ENCODE measurements at regions of chr5 and their contacts with region 1.

Region 1: GRCh38 chr5:81301271-81302015 is at the start of gene ZCCHC9:
- DNase-seq: peak; percentile 97
- ATAC-seq: peak; percentile 90
- H3K4me3 Mint-ChIP-seq: peak within 1 kb of the TSS; percentile 86
- H3K27ac Mint-ChIP-seq: peak within 1 kb of the TSS; percentile 97
- H3K4me1 Mint-ChIP-seq: peaks cover 57% of the 10 kb centered on the region
- H3K27me3 Mint-ChIP-seq: no peaks in the 10 kb centered on the region
- total RNA-seq, gene ZCCHC9: 44.3 to 45.5 TPM

Region 2: GRCh38 chr5:80407735-80408482 is 893.5 kb before region 1 on chr5 and contains the start of gene ZFYVE16:
- CTCF ChIA-PET with region 1: no interaction called
- POLR2A ChIA-PET with region 1: no interaction called
- intact Hi-C with region 1: loop called in 1 of 2 experiments (anchors 1 kb)
- DNase-seq: peak; percentile 98
- ATAC-seq: peak; percentile 94
- H3K4me3 Mint-ChIP-seq: peak within 1 kb of the TSS; percentile 82
- H3K27ac Mint-ChIP-seq: peak within 1 kb of the TSS; percentile 94
- H3K4me1 Mint-ChIP-seq: peaks cover 17% of the 10 kb centered on the region
- H3K27me3 Mint-ChIP-seq: no peaks in the 10 kb centered on the region
- total RNA-seq, gene ZFYVE16: 11.2 to 11.8 TPM

Region 3: GRCh38 chr5:80754900-80755299 is 546.5 kb before region 1 on chr5:
- CTCF ChIA-PET with region 1: no interaction called
- POLR2A ChIA-PET with region 1: no interaction called
- intact Hi-C with region 1: loop called in 1 of 2 experiments (anchors 5 kb)
- DNase-seq: peak; percentile 71
- ATAC-seq: peak; percentile 60
- H3K4me3 Mint-ChIP-seq: peak overlapping the region; percentile 41
- H3K27ac Mint-ChIP-seq: peak overlapping the region; percentile 80
- H3K4me1 Mint-ChIP-seq: peaks cover 55% of the 10 kb centered on the region
- H3K27me3 Mint-ChIP-seq: no peaks in the 10 kb centered on the region

Region 4: DNA sequence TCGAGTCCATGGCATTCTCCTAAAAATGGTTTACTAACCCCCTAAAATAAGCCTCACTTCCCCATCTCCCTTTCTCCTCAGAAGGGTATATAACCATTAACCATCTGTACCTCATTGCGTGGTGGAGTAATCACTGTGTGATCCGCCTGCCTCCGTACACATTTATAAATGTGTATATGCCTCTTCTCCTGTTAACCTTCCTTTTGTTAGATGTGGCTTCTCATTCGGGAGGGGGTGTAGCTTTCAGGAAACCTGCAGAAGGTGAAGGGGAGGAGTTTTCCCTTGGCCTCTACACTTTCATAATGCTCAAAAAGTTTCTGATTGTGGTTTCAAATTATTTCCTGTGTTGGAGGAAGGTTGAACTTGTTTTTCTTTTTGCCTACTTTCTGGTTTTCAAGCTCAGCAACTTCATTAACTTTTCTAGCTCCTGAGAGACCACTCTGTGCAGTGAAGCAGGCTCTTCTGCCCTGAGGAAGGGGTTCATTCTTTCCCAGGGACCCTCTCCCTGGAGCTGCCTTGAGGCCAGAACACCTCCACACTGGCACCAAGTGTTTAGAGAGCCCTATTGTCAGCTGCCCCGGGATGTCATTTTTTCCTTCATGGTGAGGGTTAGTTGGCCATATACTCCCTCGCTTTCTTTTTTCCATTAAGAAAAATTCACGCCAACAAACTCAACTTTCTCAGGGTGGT is 294.4 kb before region 1 on chr5:
- CTCF ChIA-PET with region 1: no interaction called
- POLR2A ChIA-PET with region 1: no interaction called
- intact Hi-C with region 1: loop called in 1 of 2 experiments (anchors 5 kb)
- DNase-seq: peak; percentile 71
- ATAC-seq: peak; percentile 83
- H3K4me3 Mint-ChIP-seq: peak overlapping the region; percentile 77
- H3K27ac Mint-ChIP-seq: peak overlapping the region; percentile 96
- H3K4me1 Mint-ChIP-seq: peaks cover 82% of the 10 kb centered on the region
- H3K27me3 Mint-ChIP-seq: no peaks in the 10 kb centered on the region

Region 5: DNA sequence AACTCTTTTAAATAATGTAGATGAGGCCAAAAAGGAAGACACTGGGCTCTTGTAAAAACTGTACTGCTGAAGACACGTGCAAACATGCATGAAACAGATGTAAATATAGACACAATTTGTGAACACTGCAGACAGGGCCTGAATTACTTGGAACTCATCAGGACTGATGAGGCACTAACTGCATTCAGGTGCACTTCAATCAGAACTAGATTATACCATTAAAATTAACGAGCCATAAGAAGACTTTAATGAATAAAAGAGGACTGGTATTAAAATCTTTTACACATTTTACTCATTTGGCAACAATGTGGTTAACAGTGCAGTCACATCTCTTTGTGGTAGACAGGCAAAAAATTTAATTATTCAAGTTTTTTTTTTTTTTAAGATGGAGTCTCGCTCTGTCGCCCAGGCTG is 13.4 kb before region 1 on chr5:
- CTCF ChIA-PET with region 1: interaction called, 23 read pairs
- POLR2A ChIA-PET with region 1: interaction called, 4 read pairs
- intact Hi-C with region 1: no loop called
- DNase-seq: no peak
- ATAC-seq: peak; percentile 14
- H3K4me3 Mint-ChIP-seq: no peak overlapping the region
- H3K27ac Mint-ChIP-seq: no peak overlapping the region
- H3K4me1 Mint-ChIP-seq: peaks cover 57% of the 10 kb centered on the region
- H3K27me3 Mint-ChIP-seq: no peaks in the 10 kb centered on the region

Region 6: DNA sequence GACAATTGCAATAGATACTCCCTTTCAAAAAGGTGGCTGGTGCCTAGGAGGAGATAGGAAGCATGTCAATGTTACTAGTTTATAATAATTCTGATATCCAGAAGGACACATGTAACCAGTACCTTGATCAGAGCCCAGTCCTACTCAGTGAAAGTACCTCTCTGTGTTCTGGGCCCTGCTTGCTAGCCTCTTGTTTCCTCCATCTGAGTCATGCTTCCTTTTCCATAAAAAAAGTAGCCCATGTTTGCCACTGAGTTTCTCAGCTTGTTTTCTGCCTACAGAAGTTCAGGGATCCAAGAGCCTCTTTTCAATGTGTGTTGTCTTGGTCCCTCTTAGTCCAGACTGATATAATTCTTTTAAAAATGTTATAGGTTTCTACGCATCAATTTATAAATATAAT is 300.5 kb after region 1 on chr5:
- CTCF ChIA-PET with region 1: no interaction called
- POLR2A ChIA-PET with region 1: no interaction called
- intact Hi-C with region 1: no loop called
- DNase-seq: no peak
- ATAC-seq: no peak
- H3K4me3 Mint-ChIP-seq: no peak overlapping the region
- H3K27ac Mint-ChIP-seq: no peak overlapping the region
- H3K4me1 Mint-ChIP-seq: peaks cover 10% of the 10 kb centered on the region
- H3K27me3 Mint-ChIP-seq: no peaks in the 10 kb centered on the region

Region 7: DNA sequence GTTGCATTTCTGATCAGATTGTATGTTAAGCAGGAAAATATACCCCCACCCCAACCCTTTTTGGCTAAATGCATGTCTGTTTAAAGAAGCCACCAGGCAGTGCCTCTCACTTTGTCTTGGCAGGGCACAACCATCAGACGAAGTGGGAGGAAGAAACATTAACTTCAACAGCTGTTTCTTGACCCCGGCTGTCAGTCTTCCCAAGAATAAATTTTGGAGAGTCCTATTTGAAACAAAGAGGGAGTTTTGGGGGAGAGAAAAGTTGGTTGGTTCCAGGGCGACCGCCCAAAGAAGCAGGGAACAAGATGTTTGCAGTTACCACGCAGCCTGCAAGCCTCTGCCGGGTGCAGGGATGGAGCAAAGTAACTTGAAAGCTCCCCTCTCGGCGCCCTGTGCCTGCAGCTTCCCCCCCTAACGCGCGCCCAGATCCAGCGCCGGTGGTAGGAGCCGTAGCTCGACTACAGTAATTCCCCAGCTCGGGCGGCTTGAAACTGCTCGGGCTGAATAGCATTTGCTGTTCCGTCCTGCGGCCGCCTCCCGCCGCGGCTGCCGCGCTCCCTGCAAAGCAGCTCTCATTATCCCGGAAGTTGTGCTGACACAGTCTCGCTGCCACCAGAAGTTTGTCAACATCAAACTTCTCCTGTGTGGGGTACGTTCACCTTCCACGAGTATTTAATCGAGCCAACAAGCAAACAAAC is 550.2 kb after region 1 on chr5:
- CTCF ChIA-PET with region 1: no interaction called
- POLR2A ChIA-PET with region 1: no interaction called
- intact Hi-C with region 1: loop called (anchors 5 to 10 kb)
- DNase-seq: peak; percentile 93
- ATAC-seq: peak; percentile 86
- H3K4me3 Mint-ChIP-seq: peak overlapping the region; percentile 78
- H3K27ac Mint-ChIP-seq: peak overlapping the region; percentile 94
- H3K4me1 Mint-ChIP-seq: peaks cover 42% of the 10 kb centered on the region
- H3K27me3 Mint-ChIP-seq: no peaks in the 10 kb centered on the region

Region 8: GRCh38 chr5:82165740-82166530 is 864.5 kb after region 1 on chr5:
- CTCF ChIA-PET with region 1: no interaction called
- POLR2A ChIA-PET with region 1: no interaction called
- intact Hi-C with region 1: loop called in 1 of 2 experiments (anchors 5 kb)
- DNase-seq: peak; percentile 53
- ATAC-seq: peak; percentile 99
- H3K4me3 Mint-ChIP-seq: no peak overlapping the region
- H3K27ac Mint-ChIP-seq: no peak overlapping the region
- H3K4me1 Mint-ChIP-seq: peaks cover 14% of the 10 kb centered on the region
- H3K27me3 Mint-ChIP-seq: no peaks in the 10 kb centered on the region